B cell (primary cell): ENCODE measurements at regions of chr1 and their contacts with region 1.

Region 1: DNA sequence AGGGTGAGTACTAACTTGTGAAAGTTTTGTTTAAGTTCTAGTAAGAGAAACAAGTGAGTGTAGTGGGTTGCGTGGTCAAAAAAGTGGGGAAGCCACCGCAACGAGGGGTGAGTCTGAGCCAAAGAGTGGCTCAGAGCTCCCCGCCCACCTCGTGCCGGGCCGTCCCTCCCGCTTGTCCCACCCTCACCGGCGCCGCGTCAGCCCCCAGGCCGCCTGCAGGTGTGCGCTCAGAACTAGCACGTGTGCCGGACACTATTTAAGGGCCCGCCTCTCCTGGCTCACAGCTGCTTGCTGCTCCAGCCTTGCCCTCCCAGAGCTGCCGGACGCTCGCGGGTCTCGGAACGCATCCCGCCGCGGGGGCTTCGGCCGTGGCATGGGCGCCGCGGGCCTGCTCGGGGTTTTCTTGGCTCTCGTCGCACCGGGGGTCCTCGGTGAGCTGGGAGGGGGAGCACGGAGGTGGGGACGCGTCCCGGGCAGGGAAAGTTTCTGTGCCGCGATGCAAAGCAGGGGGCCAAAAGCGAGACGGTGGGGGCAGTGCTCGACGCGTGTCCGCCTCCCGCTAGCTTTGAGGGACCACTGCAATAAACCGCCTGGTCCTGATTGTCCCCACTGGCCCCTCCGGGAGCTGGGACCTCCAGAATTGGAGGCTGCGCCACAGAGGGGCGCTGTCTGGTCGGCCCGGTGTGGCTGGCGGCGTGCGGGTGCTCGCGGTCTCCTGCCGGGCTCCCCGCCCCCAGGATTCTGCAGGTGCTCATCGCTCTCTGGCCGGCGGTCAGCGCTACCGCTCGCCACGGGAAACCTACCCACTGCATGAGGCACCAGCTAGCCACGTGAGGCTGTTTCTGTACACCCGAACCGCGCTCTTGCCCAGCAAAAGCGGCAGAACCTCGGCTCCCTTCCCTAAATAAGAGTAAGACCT is at the start of gene CR2:
- DNase-seq: peak; percentile 89
- ATAC-seq: peak; percentile 92
- H3K4me3 ChIP-seq: peak within 1 kb of the TSS; percentile 75 to 90 (median 84)
- H3K4me3 Mint-ChIP-seq: peak within 1 kb of the TSS; percentile 86
- H3K27ac ChIP-seq: peak within 1 kb of the TSS; percentile 69 to 82
- H3K27ac Mint-ChIP-seq: peak within 1 kb of the TSS; percentile 79
- H3K4me1 ChIP-seq: peaks cover 44 to 46% of the 10 kb centered on the region in 2 donors
- H3K4me1 Mint-ChIP-seq: peaks cover 15% of the 10 kb centered on the region
- H3K27me3 ChIP-seq: no peaks in the 10 kb centered on the region
- H3K27me3 Mint-ChIP-seq: no peaks in the 10 kb centered on the region
- CTCF ChIP-seq: peak; percentile 75
- total RNA-seq, gene CR2: 28.1 and 30.5 TPM in 2 replicates

Region 2: DNA sequence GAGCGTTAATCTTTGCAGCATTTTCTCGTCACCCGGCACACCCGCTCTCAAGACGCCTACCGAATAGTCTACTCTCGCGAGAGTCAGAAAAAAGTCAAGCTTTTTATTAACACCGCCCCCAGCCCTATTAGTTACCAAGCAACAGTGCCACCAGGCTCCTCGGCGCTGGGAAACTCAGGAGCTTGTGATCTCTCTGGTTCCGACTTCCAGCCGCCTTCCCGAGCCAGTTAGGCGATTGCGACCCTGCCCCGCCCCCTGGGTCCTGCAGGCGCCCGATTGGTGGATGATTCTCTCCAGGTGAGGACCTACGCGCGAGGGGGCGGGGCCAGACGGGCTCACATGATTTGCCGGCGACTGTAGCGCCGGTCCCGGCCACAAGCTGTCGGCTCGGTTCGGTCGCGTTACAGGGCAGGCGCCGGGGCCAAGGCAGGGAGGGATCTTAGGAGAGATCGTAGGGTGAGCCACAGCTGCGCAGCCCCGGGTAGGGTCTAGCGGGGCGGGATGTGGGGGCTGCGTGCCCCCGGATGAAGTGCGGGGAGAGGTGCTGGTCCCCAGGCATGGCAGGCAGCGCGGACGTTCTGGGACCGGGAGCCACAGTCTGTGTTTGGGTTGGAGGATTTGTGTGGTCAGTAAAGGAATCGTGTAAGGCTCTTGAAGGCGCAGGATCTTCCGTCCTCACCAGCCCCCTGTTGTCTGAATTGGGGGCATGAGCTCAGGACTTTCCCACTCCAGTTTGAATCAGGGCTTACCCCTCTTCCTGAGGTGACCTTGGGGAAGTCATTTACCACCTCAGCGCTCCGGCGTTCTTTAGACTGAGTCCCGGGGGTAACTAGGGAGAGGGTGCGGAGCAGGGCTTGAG is 401.2 kb before region 1 on chr1 and contains the start of gene PFKFB2:
- CTCF ChIA-PET with region 1: interaction called, 10 read pairs
- POLR2A ChIA-PET with region 1: no interaction called
- intact Hi-C with region 1: no loop called
- DNase-seq: peak; percentile 98
- ATAC-seq: peak; percentile 87
- H3K4me3 ChIP-seq: peak within 1 kb of the TSS; percentile 53 to 92 (median 73)
- H3K4me3 Mint-ChIP-seq: peak within 1 kb of the TSS; percentile 99
- H3K27ac ChIP-seq: peak within 1 kb of the TSS; percentile 87 to 96
- H3K27ac Mint-ChIP-seq: peak within 1 kb of the TSS; percentile 99
- H3K4me1 ChIP-seq: peaks cover 39 to 42% of the 10 kb centered on the region in 2 donors
- H3K4me1 Mint-ChIP-seq: peaks cover 53% of the 10 kb centered on the region
- H3K27me3 ChIP-seq: no peaks in the 10 kb centered on the region
- H3K27me3 Mint-ChIP-seq: no peaks in the 10 kb centered on the region
- CTCF ChIP-seq: peak; percentile 10
- total RNA-seq, gene PFKFB2: 15.6 and 18.2 TPM in 2 replicates

Region 3: DNA sequence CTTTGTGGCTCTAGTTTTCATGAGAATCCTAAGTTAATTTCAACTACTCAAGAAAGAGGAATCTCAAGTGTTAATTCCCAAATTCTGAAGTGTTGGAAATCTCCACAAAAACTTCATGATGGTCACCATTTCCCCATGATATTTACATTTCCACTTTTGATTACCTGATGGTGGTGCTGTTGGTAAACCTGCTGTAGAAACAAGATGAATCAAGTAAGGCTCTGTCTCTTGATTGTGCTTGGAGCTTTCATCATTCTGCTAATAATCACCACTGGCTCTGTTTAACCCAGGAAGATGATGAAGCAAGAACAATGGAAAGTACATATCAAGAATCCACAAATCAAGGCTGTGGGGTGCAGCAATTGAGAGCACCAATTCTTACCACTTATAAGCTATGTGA is 272.5 kb before region 1 on chr1:
- CTCF ChIA-PET with region 1: interaction called, 10 read pairs
- POLR2A ChIA-PET with region 1: no interaction called
- intact Hi-C with region 1: no loop called
- DNase-seq: peak; percentile 54
- ATAC-seq: no peak
- H3K4me3 ChIP-seq: no peak overlapping the region
- H3K4me3 Mint-ChIP-seq: no peak overlapping the region
- H3K27ac ChIP-seq: no peak overlapping the region
- H3K27ac Mint-ChIP-seq: no peak overlapping the region
- H3K4me1 ChIP-seq: no peaks in the 10 kb centered on the region
- H3K4me1 Mint-ChIP-seq: peaks cover 11% of the 10 kb centered on the region
- H3K27me3 ChIP-seq: no peaks in the 10 kb centered on the region
- H3K27me3 Mint-ChIP-seq: peaks cover 6% of the 10 kb centered on the region
- CTCF ChIP-seq: peak; percentile 43

Region 4: DNA sequence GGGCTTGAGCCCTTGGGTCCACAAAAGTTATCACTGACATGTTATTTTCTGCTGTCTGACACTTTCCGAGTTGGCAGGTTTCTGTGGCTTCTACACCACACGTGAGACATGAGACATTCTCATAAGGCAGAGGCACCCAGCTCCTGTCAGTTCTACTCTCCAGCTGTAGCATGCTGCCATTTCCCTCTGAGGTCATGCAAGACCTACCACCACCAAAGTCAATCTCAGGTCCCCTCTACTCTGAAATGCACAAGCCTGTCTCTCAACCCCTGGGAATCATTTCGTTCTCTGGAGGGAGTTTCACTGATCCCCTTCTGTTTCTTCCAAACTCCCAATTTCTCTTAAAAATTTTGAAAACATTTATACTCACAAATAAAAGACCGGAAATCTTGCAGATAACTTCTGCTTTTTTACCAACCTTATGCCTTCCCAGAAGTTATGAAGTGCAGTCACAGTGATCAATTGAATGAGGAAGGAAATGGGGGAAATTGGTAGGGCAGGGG is 39.6 kb before region 1 on chr1:
- CTCF ChIA-PET with region 1: interaction called, 20 read pairs
- POLR2A ChIA-PET with region 1: interaction called, 4 read pairs
- intact Hi-C with region 1: loop called (anchors 2 kb)
- DNase-seq: peak; percentile 84
- ATAC-seq: peak; percentile 90
- H3K4me3 ChIP-seq: peak overlapping the region in 4 of 5 experiments; percentile 28 to 39 (median 34)
- H3K4me3 Mint-ChIP-seq: peak overlapping the region; percentile 75
- H3K27ac ChIP-seq: peak overlapping the region; percentile 67 to 93
- H3K27ac Mint-ChIP-seq: peak overlapping the region; percentile 80
- H3K4me1 ChIP-seq: peaks cover 80 to 83% of the 10 kb centered on the region in 2 donors
- H3K4me1 Mint-ChIP-seq: peaks cover 77% of the 10 kb centered on the region
- H3K27me3 ChIP-seq: no peaks in the 10 kb centered on the region
- H3K27me3 Mint-ChIP-seq: no peaks in the 10 kb centered on the region
- CTCF ChIP-seq: no peak

Region 5: DNA sequence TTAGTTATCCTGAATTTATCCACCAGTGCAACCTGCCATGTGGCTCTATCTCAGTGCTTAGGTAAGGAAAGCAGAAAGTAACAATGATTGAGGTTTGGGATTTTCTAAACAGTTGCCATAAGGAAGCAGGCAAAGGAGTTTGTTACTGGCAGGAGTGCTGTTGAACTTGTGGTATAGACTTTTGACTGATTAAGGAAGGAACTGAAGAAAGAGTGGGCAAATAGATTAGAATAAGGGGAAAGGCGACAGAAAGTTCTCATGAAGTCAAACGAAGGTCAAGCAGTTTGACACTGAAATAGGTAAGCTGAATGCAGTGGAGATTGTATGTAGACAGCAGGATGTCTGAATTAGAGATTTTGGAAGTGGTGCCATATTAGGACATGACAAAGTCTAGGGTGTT is 24.3 kb before region 1 on chr1:
- CTCF ChIA-PET with region 1: interaction called, 21 read pairs
- POLR2A ChIA-PET with region 1: interaction called, 5 read pairs
- intact Hi-C with region 1: loop called (anchors 1 kb)
- DNase-seq: peak; percentile 41
- ATAC-seq: peak; percentile 2
- H3K4me3 ChIP-seq: peak overlapping the region in 1 of 5 experiments; percentile 54
- H3K4me3 Mint-ChIP-seq: peak overlapping the region; percentile 62
- H3K27ac ChIP-seq: peak overlapping the region; percentile 65 to 83
- H3K27ac Mint-ChIP-seq: peak overlapping the region; percentile 78
- H3K4me1 ChIP-seq: peaks cover 80 to 85% of the 10 kb centered on the region in 2 donors
- H3K4me1 Mint-ChIP-seq: peaks cover 86% of the 10 kb centered on the region
- H3K27me3 ChIP-seq: no peaks in the 10 kb centered on the region
- H3K27me3 Mint-ChIP-seq: no peaks in the 10 kb centered on the region
- CTCF ChIP-seq: no peak

Region 6: GRCh38 chr1:207654320-207654719 is 200.0 kb after region 1 on chr1:
- CTCF ChIA-PET with region 1: no interaction called
- POLR2A ChIA-PET with region 1: no interaction called
- intact Hi-C with region 1: no loop called
- DNase-seq: no peak
- ATAC-seq: no peak
- H3K4me3 ChIP-seq: no peak overlapping the region
- H3K4me3 Mint-ChIP-seq: no peak overlapping the region
- H3K27ac ChIP-seq: no peak overlapping the region
- H3K27ac Mint-ChIP-seq: no peak overlapping the region
- H3K4me1 ChIP-seq: no peaks in the 10 kb centered on the region
- H3K4me1 Mint-ChIP-seq: no peaks in the 10 kb centered on the region
- H3K27me3 ChIP-seq: no peaks in the 10 kb centered on the region
- H3K27me3 Mint-ChIP-seq: no peaks in the 10 kb centered on the region
- CTCF ChIP-seq: no peak

Region 7: GRCh38 chr1:207811920-207812720 is 357.8 kb after region 1 on chr1:
- CTCF ChIA-PET with region 1: no interaction called
- POLR2A ChIA-PET with region 1: no interaction called
- intact Hi-C with region 1: no loop called
- DNase-seq: peak; percentile 31
- ATAC-seq: no peak
- H3K4me3 ChIP-seq: no peak overlapping the region
- H3K4me3 Mint-ChIP-seq: no peak overlapping the region
- H3K27ac ChIP-seq: peak overlapping the region in 1 of 2 donors; percentile 25
- H3K27ac Mint-ChIP-seq: peak overlapping the region; percentile 72
- H3K4me1 ChIP-seq: peaks cover 34 to 46% of the 10 kb centered on the region in 2 donors
- H3K4me1 Mint-ChIP-seq: peaks cover 88% of the 10 kb centered on the region
- H3K27me3 ChIP-seq: no peaks in the 10 kb centered on the region
- H3K27me3 Mint-ChIP-seq: no peaks in the 10 kb centered on the region
- CTCF ChIP-seq: no peak